ENCODE measurements at regions of chr10 and their contacts with region 1.

Region 1: GRCh38 chr10:124732931-124733570 is 11.1 kb downstream of the FAM53B start:
- DNase-seq: no peak
- ATAC-seq: no peak
- H3K4me3 ChIP-seq: no peak overlapping the region
- H3K27ac ChIP-seq: no peak overlapping the region
- H3K4me1 ChIP-seq: peaks cover 0 to 36% (median 18%) of the 10 kb centered on the region in 4 donors
- H3K27me3 ChIP-seq: no peaks in the 10 kb centered on the region
- CTCF ChIP-seq: no peak
- POLR2A ChIP-seq: no peak

Region 2: DNA sequence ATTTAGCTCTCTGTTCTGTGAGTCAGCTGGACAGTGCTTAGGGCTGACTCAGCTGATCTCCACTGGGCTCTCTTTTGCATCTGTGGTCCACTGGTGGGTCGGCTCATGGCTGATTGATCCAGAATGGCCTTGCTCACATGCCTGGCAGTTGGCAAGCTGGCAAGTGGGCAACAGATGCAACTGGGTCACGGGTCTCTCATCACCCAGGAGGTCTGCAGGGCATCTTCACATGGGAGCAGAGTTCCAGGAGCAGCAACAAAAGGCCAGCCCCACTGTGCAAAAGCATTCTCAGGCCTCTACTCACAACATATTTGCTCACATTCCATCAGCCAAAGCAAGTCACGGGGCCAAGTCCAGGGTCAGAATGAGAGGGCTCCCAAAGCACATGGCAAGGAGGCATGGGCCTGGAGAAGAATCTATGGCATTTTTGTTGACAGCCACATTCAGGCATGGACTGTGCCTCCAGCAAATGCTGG is 413.1 kb before region 1 on chr10:
- intact Hi-C with region 1: no loop called
- DNase-seq: peak in 1 of 3 donors; percentile 23
- ATAC-seq: no peak
- H3K4me3 ChIP-seq: no peak overlapping the region
- H3K27ac ChIP-seq: no peak overlapping the region
- H3K4me1 ChIP-seq: no peaks in the 10 kb centered on the region
- H3K27me3 ChIP-seq: no peaks in the 10 kb centered on the region
- CTCF ChIP-seq: no peak
- POLR2A ChIP-seq: no peak

Region 3: DNA sequence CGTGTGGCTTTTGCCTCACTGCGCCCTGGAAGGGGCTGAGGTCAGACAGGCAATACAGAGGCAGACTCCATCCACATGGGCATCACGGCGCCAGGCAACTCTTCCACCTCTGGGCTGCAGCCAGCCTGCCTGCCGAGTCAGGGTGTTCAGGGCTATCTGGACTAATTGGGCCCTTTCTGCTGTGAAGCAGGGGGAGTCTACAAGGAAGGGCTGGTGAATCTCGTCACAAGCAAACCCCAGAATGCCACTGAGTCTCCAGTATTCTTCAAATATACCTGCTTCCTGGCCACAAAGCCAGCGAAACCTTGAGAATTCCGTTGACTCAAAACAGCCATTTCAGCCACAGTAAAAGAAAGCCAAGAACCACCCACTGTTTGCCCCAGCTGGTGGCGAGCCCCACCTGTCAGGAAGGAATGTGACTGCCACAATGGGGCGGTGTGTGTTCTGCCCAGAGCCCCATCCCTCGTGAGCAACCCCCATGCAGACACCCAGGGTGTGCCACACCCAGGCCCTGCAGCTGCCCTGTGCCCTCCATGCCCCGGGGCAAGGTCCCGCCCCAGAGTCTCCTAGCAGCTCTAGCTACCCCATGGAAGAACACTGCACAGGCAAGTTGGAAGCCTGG is 106.2 kb before region 1 on chr10:
- intact Hi-C with region 1: loop called in 1 of 2 experiments (anchors 10 kb)
- DNase-seq: no peak
- ATAC-seq: peak in 2 of 4 donors; percentile 2 to 23
- H3K4me3 ChIP-seq: no peak overlapping the region
- H3K27ac ChIP-seq: no peak overlapping the region
- H3K4me1 ChIP-seq: peaks cover 0 to 1% (median 0%) of the 10 kb centered on the region in 4 donors
- H3K27me3 ChIP-seq: no peaks in the 10 kb centered on the region
- CTCF ChIP-seq: no peak
- POLR2A ChIP-seq: no peak